Left ventricle myocardium inferior (tissue), 1 donor: ENCODE measurements at regions of chr1 and their contacts with region 1.

Region 1: DNA sequence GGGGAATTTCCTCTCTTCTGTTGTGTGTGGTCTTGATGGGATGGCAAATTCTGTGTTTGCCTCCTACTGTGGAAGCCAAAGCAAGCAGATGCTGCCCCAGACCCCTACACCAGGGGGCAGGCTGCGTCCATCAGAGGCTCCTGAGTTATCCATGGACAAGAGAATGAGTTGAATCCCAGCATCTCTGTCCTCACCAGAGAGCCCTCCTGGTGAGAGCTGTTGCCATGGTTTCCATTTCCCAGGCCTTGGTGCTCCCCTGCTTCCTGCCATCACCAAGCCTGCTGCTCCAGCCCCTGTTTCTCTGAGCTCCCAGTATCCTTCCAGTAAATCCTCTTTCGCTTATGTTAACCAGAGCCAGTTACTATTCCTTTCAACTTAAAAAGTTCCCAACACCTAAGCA is 20.4 kb upstream of the GNG12 start:
- DNase-seq: peak; percentile 50
- H3K4me3 ChIP-seq: no peak overlapping the region
- H3K27ac ChIP-seq: no peak overlapping the region
- H3K4me1 ChIP-seq: peaks cover 11% of the 10 kb centered on the region
- H3K27me3 ChIP-seq: no peaks in the 10 kb centered on the region
- CTCF ChIP-seq: peak; percentile 83

Region 2: GRCh38 chr1:67803380-67804279 is 50.1 kb before region 1 on chr1:
- intact Hi-C with region 1: no loop called
- DNase-seq: no peak
- H3K4me3 ChIP-seq: no peak overlapping the region
- H3K27ac ChIP-seq: peak overlapping the region; percentile 39
- H3K4me1 ChIP-seq: peaks cover 36% of the 10 kb centered on the region
- H3K27me3 ChIP-seq: no peaks in the 10 kb centered on the region
- CTCF ChIP-seq: no peak

Region 3: DNA sequence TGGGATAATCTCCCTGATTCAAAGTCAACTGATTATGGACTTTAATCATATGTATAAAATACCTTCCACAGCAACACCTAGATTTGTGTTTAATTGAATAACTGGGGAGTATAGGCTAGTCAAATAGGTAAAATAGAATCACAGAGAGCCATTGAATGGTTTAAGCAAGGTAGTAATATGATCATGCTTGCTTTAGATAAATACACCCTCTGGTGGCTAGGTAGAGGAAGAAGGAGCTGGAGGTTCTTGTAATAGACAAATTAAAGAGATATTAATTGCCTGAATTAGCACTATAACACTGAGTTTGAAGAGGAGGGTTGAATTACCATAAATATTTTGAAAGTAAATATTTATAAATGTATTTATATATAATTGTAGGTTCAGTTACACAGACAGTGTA is 156.4 kb after region 1 on chr1:
- intact Hi-C with region 1: loop called (anchors 5 kb)
- DNase-seq: no peak
- H3K4me3 ChIP-seq: no peak overlapping the region
- H3K27ac ChIP-seq: no peak overlapping the region
- H3K4me1 ChIP-seq: peaks cover under 1% of the 10 kb centered on the region
- H3K27me3 ChIP-seq: no peaks in the 10 kb centered on the region
- CTCF ChIP-seq: peak; percentile 60

Region 4: GRCh38 chr1:68111519-68112436 is 258.1 kb after region 1 on chr1:
- intact Hi-C with region 1: loop called (anchors 5 kb)
- DNase-seq: peak; percentile 67
- H3K4me3 ChIP-seq: no peak overlapping the region
- H3K27ac ChIP-seq: no peak overlapping the region
- H3K4me1 ChIP-seq: peaks cover 42% of the 10 kb centered on the region
- H3K27me3 ChIP-seq: no peaks in the 10 kb centered on the region
- CTCF ChIP-seq: peak; percentile 64